ENCODE measurements at regions of chr5 and their contacts with region 1.

Region 1: GRCh38 chr5:98768160-98769005 is 5.1 kb upstream of the RGMB start:
- DNase-seq: no peak
- H3K4me3 ChIP-seq: peak overlapping the region; percentile 84
- H3K27me3 ChIP-seq: no peaks in the 10 kb centered on the region
- CTCF ChIP-seq: peak; percentile 96

Region 2: GRCh38 chr5:98341038-98342032 is 427.0 kb before region 1 on chr5:
- CTCF ChIA-PET with region 1: interaction called, 12 read pairs
- POLR2A ChIA-PET with region 1: interaction called, 17 read pairs
- DNase-seq: peak; percentile 98
- H3K4me3 ChIP-seq: no peak overlapping the region
- H3K27me3 ChIP-seq: no peaks in the 10 kb centered on the region
- CTCF ChIP-seq: no peak

Region 3: GRCh38 chr5:98354922-98355321 is 413.5 kb before region 1 on chr5:
- CTCF ChIA-PET with region 1: interaction called, 12 read pairs
- POLR2A ChIA-PET with region 1: no interaction called
- DNase-seq: no peak
- H3K4me3 ChIP-seq: no peak overlapping the region
- H3K27me3 ChIP-seq: no peaks in the 10 kb centered on the region
- CTCF ChIP-seq: no peak

Region 4: GRCh38 chr5:98433673-98434072 is 334.7 kb before region 1 on chr5:
- CTCF ChIA-PET with region 1: interaction called, 27 read pairs
- POLR2A ChIA-PET with region 1: no interaction called
- DNase-seq: no peak
- H3K4me3 ChIP-seq: no peak overlapping the region
- H3K27me3 ChIP-seq: no peaks in the 10 kb centered on the region
- CTCF ChIP-seq: no peak

Region 5: GRCh38 chr5:98796197-98796972 is 28.0 kb after region 1 on chr5:
- CTCF ChIA-PET with region 1: interaction called, 14 read pairs
- POLR2A ChIA-PET with region 1: interaction called, 7 read pairs
- DNase-seq: no peak
- H3K4me3 ChIP-seq: no peak overlapping the region
- H3K27me3 ChIP-seq: no peaks in the 10 kb centered on the region
- CTCF ChIP-seq: peak; percentile 78

Measured in BJ (cell line).